Calu3 (cell line): ENCODE measurements at regions of chr17 and their contacts with region 1.

Region 1: GRCh38 chr17:62892870-62893338 is 73.1 kb upstream of the TANC2 start:
- DNase-seq: peak; percentile 54
- H3K4me3 Mint-ChIP-seq: no peak overlapping the region
- H3K27ac Mint-ChIP-seq: peak overlapping the region; percentile 56
- H3K4me1 Mint-ChIP-seq: peaks cover 16% of the 10 kb centered on the region
- H3K27me3 Mint-ChIP-seq: no peaks in the 10 kb centered on the region
- CTCF ChIP-seq: no peak

Region 2: GRCh38 chr17:62791751-62792445 is 101.0 kb before region 1 on chr17:
- CTCF ChIA-PET with region 1: no interaction called
- intact Hi-C with region 1: loop called (anchors 10 kb)
- DNase-seq: peak; percentile 69
- H3K4me3 Mint-ChIP-seq: peak overlapping the region; percentile 63
- H3K27ac Mint-ChIP-seq: peak overlapping the region; percentile 94
- H3K4me1 Mint-ChIP-seq: peaks cover 38% of the 10 kb centered on the region
- H3K27me3 Mint-ChIP-seq: no peaks in the 10 kb centered on the region
- CTCF ChIP-seq: no peak